ENCODE measurements at regions of chr3 and their contacts with region 1.

Region 1: GRCh38 chr3:41198950-41199865 is at the start of gene CTNNB1:
- DNase-seq: peak; percentile 97
- H3K4me3 Mint-ChIP-seq: peak within 1 kb of the TSS; percentile 96
- H3K27ac Mint-ChIP-seq: peak within 1 kb of the TSS; percentile 96
- H3K4me1 Mint-ChIP-seq: peaks cover 24% of the 10 kb centered on the region
- H3K27me3 Mint-ChIP-seq: peaks cover 21% of the 10 kb centered on the region
- total RNA-seq, gene CTNNB1: 142 and 147 TPM in 2 replicates

Region 2: DNA sequence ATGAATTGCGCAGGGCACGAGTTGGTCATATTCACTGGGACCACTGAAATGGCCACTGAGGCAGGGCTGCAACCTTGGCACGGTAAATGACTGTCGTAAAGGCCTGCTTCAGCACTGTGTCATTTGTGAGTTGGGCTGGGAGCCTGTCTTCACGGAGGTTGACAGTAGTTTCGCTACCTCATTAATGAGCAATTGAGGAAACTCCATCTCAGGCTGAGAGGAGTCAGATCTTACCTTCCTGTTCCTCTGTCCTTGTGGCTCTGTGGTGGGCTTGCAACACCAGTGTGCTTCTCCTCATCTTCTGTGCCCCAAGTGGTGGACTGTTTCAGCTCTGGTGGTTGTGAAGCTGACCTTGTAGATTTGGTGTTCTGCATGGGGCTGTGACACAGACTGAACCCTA is 969.8 kb before region 1 on chr3:
- intact Hi-C with region 1: no loop called
- DNase-seq: no peak
- H3K4me3 Mint-ChIP-seq: no peak overlapping the region
- H3K27ac Mint-ChIP-seq: no peak overlapping the region
- H3K4me1 Mint-ChIP-seq: no peaks in the 10 kb centered on the region
- H3K27me3 Mint-ChIP-seq: no peaks in the 10 kb centered on the region

Region 3: GRCh38 chr3:40452876-40453730 is 746.1 kb before region 1 on chr3:
- intact Hi-C with region 1: loop called (anchors 5 kb)
- DNase-seq: peak; percentile 98
- H3K4me3 Mint-ChIP-seq: peak overlapping the region; percentile 93
- H3K27ac Mint-ChIP-seq: peak overlapping the region; percentile 97
- H3K4me1 Mint-ChIP-seq: peaks cover 24% of the 10 kb centered on the region
- H3K27me3 Mint-ChIP-seq: peaks cover 2% of the 10 kb centered on the region

Region 4: DNA sequence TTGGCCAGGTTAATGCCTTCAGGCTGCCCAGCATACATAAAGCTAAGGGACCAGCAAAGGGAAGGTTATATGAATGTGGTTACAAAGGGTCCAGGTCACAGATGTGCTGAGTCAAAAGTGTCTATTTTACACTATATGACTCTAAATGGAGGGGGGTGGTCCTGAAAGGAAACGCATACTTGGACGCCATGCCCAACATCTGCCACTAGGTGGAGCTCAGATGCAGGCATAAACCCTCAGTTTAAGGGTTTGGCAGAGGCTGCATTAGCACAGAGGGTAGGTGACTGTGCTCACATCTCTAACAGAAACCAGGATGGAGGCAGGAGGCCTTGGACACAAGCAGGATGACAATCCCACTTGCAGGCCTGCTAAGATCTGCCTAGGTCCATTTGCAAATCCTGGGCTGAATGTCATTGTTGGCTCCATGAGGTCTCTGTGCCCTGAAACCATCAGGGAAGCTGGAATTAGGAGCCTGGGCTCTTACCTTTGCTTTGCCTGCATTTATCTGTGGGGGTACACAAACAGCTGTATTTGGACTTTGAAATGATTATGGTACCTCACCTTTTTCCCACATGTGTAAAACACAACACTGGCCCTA is 618.6 kb before region 1 on chr3:
- intact Hi-C with region 1: loop called (anchors 5 kb)
- DNase-seq: peak; percentile 88
- H3K4me3 Mint-ChIP-seq: no peak overlapping the region
- H3K27ac Mint-ChIP-seq: no peak overlapping the region
- H3K4me1 Mint-ChIP-seq: no peaks in the 10 kb centered on the region
- H3K27me3 Mint-ChIP-seq: peaks cover 7% of the 10 kb centered on the region

Region 5: GRCh38 chr3:41117398-41117870 is 81.8 kb before region 1 on chr3:
- intact Hi-C with region 1: loop called (anchors 5 kb)
- DNase-seq: peak; percentile 92
- H3K4me3 Mint-ChIP-seq: peak overlapping the region; percentile 51
- H3K27ac Mint-ChIP-seq: peak overlapping the region; percentile 79
- H3K4me1 Mint-ChIP-seq: peaks cover 16% of the 10 kb centered on the region
- H3K27me3 Mint-ChIP-seq: no peaks in the 10 kb centered on the region

Region 6: DNA sequence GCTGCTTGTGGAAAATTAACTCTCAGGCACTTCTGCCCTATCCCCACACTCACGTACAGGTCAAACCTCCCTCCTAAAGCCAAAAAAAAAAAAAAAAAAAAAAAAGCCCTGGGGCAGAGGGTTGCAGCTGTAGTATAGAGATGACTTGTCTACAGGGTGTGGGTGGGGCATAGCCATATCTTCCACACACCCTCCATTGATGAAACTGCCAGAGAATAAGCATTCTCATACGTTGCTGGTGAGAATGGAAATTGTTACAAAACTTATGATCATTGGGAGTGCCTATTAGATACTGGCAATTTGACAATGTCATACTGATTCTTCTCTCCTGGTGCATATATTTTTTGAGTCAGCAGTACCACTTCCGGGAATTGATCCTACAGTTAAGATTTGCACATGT is 10.9 kb before region 1 on chr3:
- intact Hi-C with region 1: loop called (anchors 1 kb)
- DNase-seq: peak; percentile 59
- H3K4me3 Mint-ChIP-seq: no peak overlapping the region
- H3K27ac Mint-ChIP-seq: peak overlapping the region; percentile 69
- H3K4me1 Mint-ChIP-seq: peaks cover 23% of the 10 kb centered on the region
- H3K27me3 Mint-ChIP-seq: peaks cover 15% of the 10 kb centered on the region